ENCODE measurements at regions of chr11 and their contacts with region 1.

Region 1: DNA sequence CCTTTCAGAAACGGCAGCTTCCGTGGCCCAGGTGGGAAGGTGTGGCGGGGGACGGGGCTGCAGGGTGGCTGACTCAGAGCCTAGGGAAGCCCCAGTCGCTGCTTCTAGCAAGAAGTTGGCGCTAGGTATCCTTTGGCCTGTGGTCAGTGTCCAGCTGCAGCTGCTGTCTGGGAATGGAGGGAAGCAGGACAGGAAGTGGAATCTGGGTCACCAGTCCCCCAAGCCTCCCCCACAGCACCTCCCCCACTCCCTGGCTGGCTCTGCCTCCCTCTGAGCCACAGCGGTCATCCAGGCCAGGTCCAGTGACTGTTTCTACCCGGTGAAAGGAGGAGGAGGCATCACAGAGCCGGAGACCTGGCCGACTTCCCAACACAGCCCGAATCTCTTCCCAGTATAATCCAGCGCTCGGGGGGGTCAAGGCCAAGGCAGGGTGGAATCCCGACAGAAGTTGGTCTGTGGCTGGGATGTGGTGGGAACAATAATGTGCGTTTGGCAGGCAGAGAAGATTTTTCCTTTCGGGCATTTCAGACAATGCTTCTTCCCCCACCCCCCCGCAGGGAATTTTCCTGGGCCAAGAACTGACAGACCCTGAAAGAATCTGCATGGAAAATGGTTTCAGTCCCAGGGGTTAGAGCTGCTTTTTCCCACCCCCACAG is 45.1 kb downstream of the C11orf96 start:
- DNase-seq: no peak
- ATAC-seq: peak; percentile 23; the same call in 2 of the 3 replicates
- H3K4me3 ChIP-seq: no peak overlapping the region
- H3K27ac ChIP-seq: no peak overlapping the region
- H3K4me1 ChIP-seq: peaks cover 10 to 12% of the 10 kb centered on the region in 2 experiments
- H3K27me3 ChIP-seq: peaks cover 0 to 5% of the 10 kb centered on the region in 2 experiments; a peak in 3 of 5 replicates
- CTCF ChIP-seq: no peak
- EP300 ChIP-seq: no peak
- POLR2A ChIP-seq: no peak
- RAD21 ChIP-seq: no peak

Region 2: GRCh38 chr11:43952401-43953342 is 34.8 kb before region 1 on chr11:
- CTCF ChIA-PET with region 1: no interaction called
- POLR2A ChIA-PET with region 1: no interaction called
- in situ Hi-C with region 1: no loop called
- intact Hi-C with region 1: loop called (anchors 2 kb)
- DNase-seq: peak in 3 of 4 experiments; percentile 27 to 78 (median 63)
- ATAC-seq: peak; percentile 79
- H3K4me3 ChIP-seq: 0 out of 2 replicates have a peak overlapping the region, but pooled peaks have one; percentile 9
- H3K27ac ChIP-seq: peak overlapping the region; percentile 89
- H3K4me1 ChIP-seq: peaks cover 11 to 48% of the 10 kb centered on the region in 2 experiments; a peak in 3 of 5 replicates
- H3K27me3 ChIP-seq: no peaks in the 10 kb centered on the region
- CTCF ChIP-seq: no peak
- EP300 ChIP-seq: peak; percentile 85
- POLR2A ChIP-seq: no peak
- RAD21 ChIP-seq: no peak

Region 3: DNA sequence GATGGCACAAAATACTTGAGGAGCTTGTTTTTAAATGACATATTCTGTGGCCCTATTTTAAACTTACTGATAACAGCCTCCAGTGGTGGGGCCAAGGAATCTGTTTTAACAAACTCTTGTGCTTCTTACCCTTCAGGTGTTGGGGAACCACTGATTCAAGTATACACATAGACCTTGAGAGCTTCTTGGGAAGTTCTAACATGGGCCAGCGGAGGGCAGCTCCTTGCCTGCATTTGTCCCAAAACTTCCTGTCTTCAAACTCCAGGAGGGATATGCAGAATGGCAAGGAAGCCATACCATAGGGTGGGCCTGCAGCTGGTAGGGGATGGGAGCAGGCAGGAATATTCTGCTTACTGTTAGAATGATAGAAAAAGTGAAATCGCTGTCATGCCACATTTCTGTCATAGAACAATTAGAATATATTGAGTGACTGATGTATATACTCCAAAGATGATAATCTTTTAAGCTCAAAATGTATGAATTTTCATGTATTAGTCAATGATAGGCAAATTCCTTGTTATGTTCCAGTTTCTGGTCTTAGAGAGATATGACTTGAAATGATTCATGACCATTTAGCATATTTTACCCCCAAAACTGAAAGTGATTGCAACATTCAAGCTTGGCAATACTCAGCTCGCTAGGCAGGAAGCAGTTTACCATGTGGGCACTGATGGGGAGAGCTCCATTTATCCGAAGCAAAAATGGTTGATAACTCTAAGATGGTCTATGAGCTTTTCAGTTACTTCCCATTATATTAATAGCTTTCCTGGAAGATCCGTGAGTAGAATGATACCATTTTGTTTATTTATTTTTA is 117.2 kb after region 1 on chr11:
- CTCF ChIA-PET with region 1: no interaction called
- POLR2A ChIA-PET with region 1: no interaction called
- in situ Hi-C with region 1: no loop called
- intact Hi-C with region 1: no loop called
- DNase-seq: peak in 1 of 4 experiments; percentile 12
- ATAC-seq: peak; percentile 63
- H3K4me3 ChIP-seq: no peak overlapping the region
- H3K27ac ChIP-seq: no peak overlapping the region
- H3K4me1 ChIP-seq: no peaks in the 10 kb centered on the region
- H3K27me3 ChIP-seq: no peaks in the 10 kb centered on the region
- CTCF ChIP-seq: peak in 2 of 3 experiments; percentile 19 to 27; a peak in 1 of 6 replicates
- EP300 ChIP-seq: no peak
- POLR2A ChIP-seq: no peak
- RAD21 ChIP-seq: peak in 1 of 2 experiments; percentile 29; a peak in 1 of 4 replicates

Measured in K562 (cell line).